H1 (cell line): ENCODE measurements at regions of chr1 and their contacts with region 1.

Region 1: DNA sequence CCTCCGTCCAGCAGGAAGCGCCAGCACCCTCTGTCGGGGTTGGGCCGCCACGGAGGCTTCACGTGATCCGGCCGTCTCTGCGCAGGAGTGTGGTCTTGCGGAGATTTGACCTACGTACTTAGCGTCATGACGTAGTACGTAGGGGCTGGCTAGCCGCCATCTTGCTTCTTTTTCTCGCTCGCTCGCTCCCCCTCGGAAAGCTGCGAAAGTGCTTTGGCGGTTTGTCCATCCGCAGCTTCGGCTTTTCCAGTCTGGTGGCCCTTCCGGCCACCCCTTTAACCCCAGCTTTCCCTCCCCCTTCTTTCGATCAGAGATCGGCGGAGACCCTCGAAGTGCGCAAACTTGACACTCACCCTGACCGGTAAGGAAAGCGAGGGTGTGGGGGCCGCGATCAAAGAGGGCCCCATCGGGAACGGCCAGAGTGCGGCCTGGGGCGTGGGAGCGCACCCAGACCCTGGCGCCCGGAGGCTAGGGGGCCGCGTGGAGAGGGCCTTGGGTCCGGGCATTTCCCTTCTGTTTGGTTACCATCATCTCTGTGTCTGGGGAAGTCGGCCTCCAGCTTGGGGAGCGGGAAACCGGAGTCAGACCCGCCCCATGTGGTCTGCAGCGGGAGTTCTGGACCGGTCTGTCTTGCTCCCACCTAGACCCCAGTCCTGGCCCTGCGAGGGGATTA is at the start of gene PRRC2C:
- DNase-seq: peak; percentile 86 to 94
- H3K4me3 ChIP-seq: peak within 1 kb of the TSS; percentile 69 to 92 (median 86)
- H3K27ac ChIP-seq: peak within 1 kb of the TSS; percentile 96
- H3K4me1 ChIP-seq: peaks cover 0 to 4% (median 0%) of the 10 kb centered on the region in 4 experiments; a peak in 2 of 7 replicates
- H3K27me3 ChIP-seq: no peaks in the 10 kb centered on the region
- CTCF ChIP-seq: peak; percentile 69 to 87 (median 70)
- EP300 ChIP-seq: peak in 1 of 2 experiments; percentile 46; a peak in 1 of 3 replicates
- POLR2A ChIP-seq: peak; percentile 78 to 88
- RAD21 ChIP-seq: peak; percentile 75 to 80
- total RNA-seq, gene PRRC2C: 264 and 274 TPM in 2 replicates

Region 2: GRCh38 chr1:171381866-171382210 is 103.7 kb before region 1 on chr1:
- CTCF ChIA-PET with region 1: no interaction called
- POLR2A ChIA-PET with region 1: no interaction called
- DNase-seq: no peak
- H3K4me3 ChIP-seq: no peak overlapping the region
- H3K27ac ChIP-seq: no peak overlapping the region
- H3K4me1 ChIP-seq: no peaks in the 10 kb centered on the region
- H3K27me3 ChIP-seq: no peaks in the 10 kb centered on the region
- CTCF ChIP-seq: no peak
- EP300 ChIP-seq: no peak
- POLR2A ChIP-seq: no peak
- RAD21 ChIP-seq: no peak

Region 3: DNA sequence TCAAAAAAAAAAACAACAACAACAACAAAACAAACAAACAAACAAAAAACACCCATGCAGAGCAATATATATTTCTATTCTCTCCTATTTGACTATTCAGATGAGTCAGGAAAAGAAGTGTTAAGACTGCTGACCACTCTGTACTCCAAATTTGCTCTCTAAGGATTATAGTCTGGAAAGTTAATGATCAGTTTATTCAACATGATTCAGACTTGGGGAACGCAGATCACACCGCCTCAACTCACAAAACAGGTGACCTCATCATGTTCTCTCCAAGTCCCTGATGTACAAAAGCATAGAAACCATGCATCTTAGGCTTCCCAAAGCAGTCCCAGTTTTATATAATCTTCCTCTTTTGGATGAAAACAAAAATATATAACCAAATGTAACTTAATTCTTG is 52.1 kb before region 1 on chr1:
- CTCF ChIA-PET with region 1: interaction called, 5 read pairs
- POLR2A ChIA-PET with region 1: interaction called, 27 read pairs
- DNase-seq: no peak
- H3K4me3 ChIP-seq: no peak overlapping the region
- H3K27ac ChIP-seq: no peak overlapping the region
- H3K4me1 ChIP-seq: peaks cover 7 to 38% (median 18%) of the 10 kb centered on the region in 4 experiments; a peak in 6 of 7 replicates
- H3K27me3 ChIP-seq: no peaks in the 10 kb centered on the region
- CTCF ChIP-seq: no peak
- EP300 ChIP-seq: no peak
- POLR2A ChIP-seq: no peak
- RAD21 ChIP-seq: no peak

Region 4: DNA sequence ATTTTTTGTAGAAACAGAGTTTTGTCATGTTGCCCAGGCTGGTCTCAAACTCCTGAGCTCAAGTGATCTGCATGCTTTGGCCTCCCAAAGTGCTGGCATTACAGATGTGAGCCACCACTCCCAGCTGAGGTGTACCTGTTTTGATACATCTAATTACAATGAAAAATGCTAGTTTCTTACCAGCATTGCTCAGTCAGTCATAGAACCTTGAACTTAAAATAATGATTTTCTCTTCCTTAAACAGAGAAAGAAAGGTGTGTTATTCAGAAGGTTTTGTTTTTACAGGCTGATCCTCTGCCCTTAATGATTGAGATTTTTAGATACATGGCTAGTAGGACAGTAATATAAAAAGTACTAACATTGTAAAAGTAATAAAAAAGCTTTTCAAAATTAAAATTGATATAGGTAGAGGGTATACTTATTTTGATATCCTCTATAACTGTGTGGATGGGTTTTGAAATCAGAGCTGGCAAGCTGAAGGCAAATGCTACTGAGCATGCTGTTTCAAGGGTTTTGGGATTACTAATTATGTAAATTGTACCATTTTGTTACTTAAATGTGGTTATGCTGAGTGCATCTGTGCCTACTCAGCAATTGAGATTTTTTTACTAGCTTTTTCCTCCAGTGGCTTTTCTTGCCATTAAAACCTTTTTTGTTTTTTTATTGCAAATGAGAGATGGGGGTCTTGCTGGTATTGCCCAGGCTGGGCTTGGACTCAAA is 16.0 kb after region 1 on chr1:
- CTCF ChIA-PET with region 1: interaction called, 15 read pairs
- POLR2A ChIA-PET with region 1: interaction called, 21 read pairs
- DNase-seq: no peak
- H3K4me3 ChIP-seq: no peak overlapping the region
- H3K27ac ChIP-seq: no peak overlapping the region
- H3K4me1 ChIP-seq: peaks cover 1 to 3% (median 3%) of the 10 kb centered on the region in 4 experiments; a peak in 5 of 7 replicates
- H3K27me3 ChIP-seq: no peaks in the 10 kb centered on the region
- CTCF ChIP-seq: no peak
- EP300 ChIP-seq: no peak
- POLR2A ChIP-seq: no peak
- RAD21 ChIP-seq: no peak

Region 5: DNA sequence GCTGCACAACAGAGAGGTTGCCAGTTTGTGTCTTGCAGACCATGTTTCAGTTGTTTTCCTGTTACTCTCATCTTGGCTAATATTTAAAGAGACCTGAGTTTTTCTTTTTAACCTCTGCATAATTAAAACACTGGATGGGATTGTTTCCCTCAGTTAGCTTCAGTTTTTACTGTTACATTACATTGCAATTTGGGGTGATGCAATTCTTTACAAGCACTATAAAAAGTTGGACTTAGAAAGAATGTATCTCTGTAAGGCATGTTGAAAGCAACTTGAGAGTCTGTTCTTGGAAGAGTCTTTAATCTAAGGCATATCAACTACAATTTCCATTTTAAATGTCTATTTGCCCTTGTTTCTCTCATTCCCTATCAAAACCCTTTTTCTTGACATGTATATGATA is 454.9 kb after region 1 on chr1:
- CTCF ChIA-PET with region 1: no interaction called
- POLR2A ChIA-PET with region 1: no interaction called
- DNase-seq: no peak
- H3K4me3 ChIP-seq: no peak overlapping the region; a peak in 1 of 8 replicates
- H3K27ac ChIP-seq: no peak overlapping the region
- H3K4me1 ChIP-seq: peaks cover 0 to 12% (median 10%) of the 10 kb centered on the region in 4 experiments; a peak in 5 of 7 replicates
- H3K27me3 ChIP-seq: no peaks in the 10 kb centered on the region
- CTCF ChIP-seq: no peak
- EP300 ChIP-seq: no peak
- POLR2A ChIP-seq: no peak
- RAD21 ChIP-seq: no peak